WTC11 (cell line): ENCODE measurements at regions of chr5 and their contacts with region 1.

Region 1: GRCh38 chr5:112691758-112692157 is 45.9 kb upstream of the APC start:
- DNase-seq: peak; percentile 49
- ATAC-seq: peak; percentile 87
- H3K4me3 Mint-ChIP-seq: no peak overlapping the region
- H3K27ac Mint-ChIP-seq: no peak overlapping the region
- H3K4me1 Mint-ChIP-seq: peaks cover 19% of the 10 kb centered on the region
- H3K27me3 Mint-ChIP-seq: no peaks in the 10 kb centered on the region
- CTCF ChIP-seq: no peak; the same call in 1 of the 2 replicates

Region 2: GRCh38 chr5:112412346-112412745 is 279.4 kb before region 1 on chr5:
- CTCF ChIA-PET with region 1: no interaction called
- POLR2A ChIA-PET with region 1: no interaction called
- DNase-seq: no peak
- ATAC-seq: no peak
- H3K4me3 Mint-ChIP-seq: no peak overlapping the region
- H3K27ac Mint-ChIP-seq: no peak overlapping the region
- H3K4me1 Mint-ChIP-seq: peaks cover 22% of the 10 kb centered on the region
- H3K27me3 Mint-ChIP-seq: peaks cover 10% of the 10 kb centered on the region
- CTCF ChIP-seq: no peak

Region 3: DNA sequence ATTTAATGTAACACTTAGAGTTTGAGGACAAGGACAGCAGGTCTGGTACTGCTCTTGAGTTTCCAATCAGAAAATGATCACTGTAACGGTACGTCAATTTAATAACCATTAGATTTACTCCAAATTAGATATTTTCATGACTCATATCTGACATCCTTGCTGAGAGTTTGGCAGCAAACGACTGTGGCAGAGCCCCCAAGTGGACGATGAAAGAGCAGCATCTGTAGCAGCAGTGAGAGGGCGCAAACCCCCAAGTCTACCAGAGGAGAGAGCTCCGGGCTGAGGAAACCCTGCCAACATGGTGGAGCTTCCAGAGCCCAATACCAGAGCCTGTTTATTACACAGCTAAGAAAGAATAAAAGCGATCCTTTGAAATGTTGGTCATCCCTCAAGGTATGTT is 199.5 kb before region 1 on chr5:
- CTCF ChIA-PET with region 1: interaction called, 12 read pairs
- POLR2A ChIA-PET with region 1: no interaction called
- DNase-seq: peak; percentile 69
- ATAC-seq: peak; percentile 100
- H3K4me3 Mint-ChIP-seq: no peak overlapping the region
- H3K27ac Mint-ChIP-seq: no peak overlapping the region
- H3K4me1 Mint-ChIP-seq: no peaks in the 10 kb centered on the region
- H3K27me3 Mint-ChIP-seq: no peaks in the 10 kb centered on the region
- CTCF ChIP-seq: peak; percentile 42

Region 4: GRCh38 chr5:112669328-112669963 is 22.3 kb before region 1 on chr5:
- CTCF ChIA-PET with region 1: interaction called, 10 read pairs
- POLR2A ChIA-PET with region 1: no interaction called
- DNase-seq: no peak
- ATAC-seq: peak; percentile 41; the same call in 1 of the 2 replicates
- H3K4me3 Mint-ChIP-seq: no peak overlapping the region
- H3K27ac Mint-ChIP-seq: no peak overlapping the region
- H3K4me1 Mint-ChIP-seq: no peaks in the 10 kb centered on the region
- H3K27me3 Mint-ChIP-seq: no peaks in the 10 kb centered on the region
- CTCF ChIP-seq: no peak

Region 5: GRCh38 chr5:112737463-112738190 is 45.9 kb after region 1 on chr5 and contains the start of gene APC:
- CTCF ChIA-PET with region 1: interaction called, 16 read pairs
- POLR2A ChIA-PET with region 1: interaction called, 4 read pairs
- DNase-seq: peak; percentile 92
- ATAC-seq: peak; percentile 97
- H3K4me3 Mint-ChIP-seq: peak within 1 kb of the TSS; percentile 92
- H3K27ac Mint-ChIP-seq: peak within 1 kb of the TSS; percentile 95
- H3K4me1 Mint-ChIP-seq: peaks cover 22% of the 10 kb centered on the region
- H3K27me3 Mint-ChIP-seq: no peaks in the 10 kb centered on the region
- CTCF ChIP-seq: no peak
- total RNA-seq, gene APC: 31.8 to 40.0 TPM (median 33.1 TPM) in 3 replicates

Region 6: GRCh38 chr5:112921833-112922817 is 230.4 kb after region 1 on chr5 and contains the start of gene REEP5:
- CTCF ChIA-PET with region 1: interaction called, 12 read pairs
- POLR2A ChIA-PET with region 1: no interaction called
- DNase-seq: peak; percentile 82
- ATAC-seq: peak; percentile 90
- H3K4me3 Mint-ChIP-seq: peak within 1 kb of the TSS; percentile 93
- H3K27ac Mint-ChIP-seq: peak within 1 kb of the TSS; percentile 95
- H3K4me1 Mint-ChIP-seq: peaks cover 20% of the 10 kb centered on the region
- H3K27me3 Mint-ChIP-seq: peaks cover 12% of the 10 kb centered on the region
- CTCF ChIP-seq: peak; percentile 76
- total RNA-seq, gene REEP5: 49.6 to 54.3 TPM (median 53.0 TPM) in 3 replicates